Vagina (tissue), 2 donors: ENCODE measurements at regions of chr15 and their contacts with region 1.

Region 1: DNA sequence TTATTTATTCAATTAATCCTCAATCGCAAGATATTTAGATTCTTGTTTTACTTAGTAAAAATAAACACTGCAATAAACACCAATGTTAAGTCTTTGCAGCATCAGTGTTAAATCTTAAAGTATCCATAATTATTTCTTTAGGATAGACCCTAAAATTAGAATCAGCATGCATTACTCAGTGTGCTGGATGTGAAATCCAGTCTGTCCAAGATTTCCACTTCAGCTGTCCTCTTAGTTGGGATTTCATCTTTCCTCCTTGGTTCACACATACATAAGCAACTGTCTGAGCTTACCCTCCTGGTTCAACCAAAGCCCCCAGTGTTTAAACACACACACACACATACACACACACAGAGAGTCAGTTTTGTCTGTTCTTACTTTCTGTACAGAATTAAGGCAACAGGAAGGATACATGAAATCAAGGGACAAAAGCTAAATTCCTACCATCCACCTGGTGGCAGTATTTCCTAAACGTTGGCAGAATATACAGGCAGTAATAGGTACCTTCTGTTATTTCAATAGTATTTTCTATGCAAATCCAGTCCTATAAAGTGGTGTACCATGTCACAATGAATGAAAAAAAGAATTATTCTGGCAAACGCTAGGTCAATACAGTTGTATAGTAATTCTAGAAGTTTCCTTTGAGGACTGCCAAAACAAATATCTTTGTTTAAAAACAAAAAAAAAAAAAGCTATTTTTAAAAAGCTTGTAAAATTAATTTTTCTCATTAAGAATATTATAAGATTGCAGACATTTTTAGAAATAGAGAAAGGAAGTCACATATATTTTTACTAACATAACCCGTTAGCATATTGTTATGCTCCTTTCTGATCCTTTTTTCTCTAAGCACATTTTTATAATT is 27.3 kb upstream of the DMXL2 start:
- DNase-seq: no peak
- H3K4me3 ChIP-seq: no peak overlapping the region
- H3K27ac ChIP-seq: no peak overlapping the region
- H3K4me1 ChIP-seq: no peaks in the 10 kb centered on the region
- H3K27me3 ChIP-seq: no peaks in the 10 kb centered on the region
- CTCF ChIP-seq: peak; percentile 43 to 78 (median 50)
- POLR2A ChIP-seq: no peak

Region 2: GRCh38 chr15:51077221-51078153 is 572.4 kb before region 1 on chr15:
- intact Hi-C with region 1: no loop called
- DNase-seq: no peak
- H3K4me3 ChIP-seq: peak overlapping the region; percentile 3 to 27
- H3K27ac ChIP-seq: peak overlapping the region; percentile 47
- H3K4me1 ChIP-seq: peaks cover 27% of the 10 kb centered on the region
- H3K27me3 ChIP-seq: no peaks in the 10 kb centered on the region
- CTCF ChIP-seq: no peak
- POLR2A ChIP-seq: no peak

Region 3: DNA sequence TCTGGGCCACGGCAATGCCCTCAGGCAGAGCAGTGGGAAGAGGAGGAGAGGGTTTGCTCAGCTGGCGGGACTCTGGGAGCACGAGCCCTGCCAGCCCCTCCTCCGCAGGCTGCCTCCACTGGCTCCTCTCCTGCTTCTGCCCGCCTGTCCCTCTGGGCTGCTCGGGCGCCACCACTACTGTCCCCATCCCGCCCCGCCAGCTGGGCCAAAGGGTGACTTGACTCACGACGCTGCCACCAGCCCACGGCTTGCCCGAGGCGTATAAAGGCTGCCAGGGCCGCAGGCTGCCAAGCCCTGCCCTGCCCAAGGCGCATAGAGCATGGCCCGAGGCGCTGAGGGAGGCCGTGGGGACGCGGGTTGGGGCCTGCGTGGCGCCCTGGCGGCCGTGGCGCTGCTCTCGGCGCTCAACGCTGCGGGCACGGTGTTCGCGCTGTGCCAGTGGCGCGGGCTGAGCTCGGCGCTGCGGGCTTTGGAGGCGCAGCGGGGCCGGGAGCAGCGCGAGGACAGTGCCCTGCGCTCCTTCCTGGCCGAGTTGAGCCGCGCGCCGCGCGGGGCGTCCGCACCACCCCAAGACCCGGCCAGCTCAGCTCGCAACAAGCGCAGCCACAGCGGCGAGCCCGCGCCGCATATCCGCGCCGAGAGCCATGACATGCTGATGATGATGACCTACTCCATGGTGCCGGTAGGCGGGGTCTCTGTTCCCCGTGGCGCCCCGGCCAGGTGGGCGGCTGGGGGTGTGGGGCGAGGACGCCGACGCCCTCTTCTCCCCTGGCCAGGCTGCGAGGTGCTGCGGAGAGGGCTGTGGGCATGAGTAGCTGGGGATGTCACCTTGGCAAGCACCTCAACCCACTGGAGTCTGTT is 308.3 kb before region 1 on chr15 and contains the start of gene GLDN:
- intact Hi-C with region 1: no loop called
- DNase-seq: no peak
- H3K4me3 ChIP-seq: peak within 1 kb of the TSS; percentile 32 to 37
- H3K27ac ChIP-seq: no peak within 1 kb of the TSS
- H3K4me1 ChIP-seq: peaks cover 14% of the 10 kb centered on the region
- H3K27me3 ChIP-seq: no peaks in the 10 kb centered on the region
- CTCF ChIP-seq: no peak
- POLR2A ChIP-seq: no peak
- total RNA-seq, gene GLDN: 5.9 TPM

Region 4: DNA sequence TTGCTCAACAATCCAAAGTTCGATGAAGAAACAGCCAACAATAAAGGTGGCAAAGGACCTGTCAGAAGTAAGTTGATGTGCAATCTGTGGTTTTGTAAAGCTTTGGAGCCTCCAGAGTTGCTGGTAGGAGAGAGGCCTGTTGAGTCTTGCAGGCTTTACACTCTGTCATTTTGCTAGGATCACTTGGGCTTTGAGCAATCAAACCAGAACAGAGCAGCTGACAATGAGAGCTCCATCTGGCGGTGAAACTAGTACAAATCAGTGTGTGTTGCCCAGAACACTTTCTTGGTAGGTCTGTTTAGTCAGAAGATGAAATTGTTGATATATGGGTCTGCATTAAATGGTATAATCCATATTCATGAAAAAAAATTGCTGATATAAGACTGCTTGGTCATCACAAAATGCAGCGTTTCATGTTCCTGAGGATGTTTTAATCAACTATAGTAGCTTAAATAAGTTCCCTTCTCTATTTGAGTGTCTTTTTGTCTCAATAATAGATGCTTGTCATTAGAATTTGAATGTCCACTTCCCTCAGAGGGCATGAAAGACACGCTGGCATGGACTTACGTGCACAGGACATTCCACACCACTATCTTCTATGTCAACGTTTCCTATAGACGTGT is 127.2 kb after region 1 on chr15:
- intact Hi-C with region 1: loop called (anchors 2 kb)
- DNase-seq: no peak
- H3K4me3 ChIP-seq: no peak overlapping the region
- H3K27ac ChIP-seq: no peak overlapping the region
- H3K4me1 ChIP-seq: peaks cover 6% of the 10 kb centered on the region
- H3K27me3 ChIP-seq: no peaks in the 10 kb centered on the region
- CTCF ChIP-seq: peak; percentile 64 to 75 (median 75)
- POLR2A ChIP-seq: no peak